HepG2 (cell line): ENCODE measurements at regions of chr16 and their contacts with region 1.

Region 1: DNA sequence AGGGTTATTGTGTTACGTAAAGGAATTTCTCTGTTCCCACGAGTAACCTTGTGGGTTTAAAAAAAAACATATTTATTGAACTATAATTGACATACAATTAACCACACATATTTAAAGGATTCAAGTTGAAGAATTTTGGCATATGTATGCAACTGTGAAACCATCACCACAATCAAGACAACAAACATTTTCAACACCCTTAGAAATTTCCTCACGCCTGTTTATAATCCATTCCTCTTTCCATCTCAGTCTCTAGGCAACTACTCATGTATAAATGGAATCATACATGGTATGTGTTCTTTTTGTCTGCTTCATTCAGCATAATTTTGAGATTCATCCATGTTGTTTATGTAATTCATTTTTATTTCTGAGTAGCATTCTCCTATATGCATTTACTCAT is 104.0 kb downstream of the MRTFB start:
- DNase-seq: no peak
- ATAC-seq: no peak
- H3K4me3 ChIP-seq: no peak overlapping the region
- H3K27ac ChIP-seq: no peak overlapping the region
- H3K4me1 ChIP-seq: 0 out of 2 replicates have a peak, but pooled peaks cover 6% of the 10 kb centered on the region
- H3K27me3 ChIP-seq: no peaks in the 10 kb centered on the region
- CTCF ChIP-seq: no peak
- EP300 ChIP-seq: no peak
- POLR2A ChIP-seq: no peak
- RAD21 ChIP-seq: no peak

Region 2: DNA sequence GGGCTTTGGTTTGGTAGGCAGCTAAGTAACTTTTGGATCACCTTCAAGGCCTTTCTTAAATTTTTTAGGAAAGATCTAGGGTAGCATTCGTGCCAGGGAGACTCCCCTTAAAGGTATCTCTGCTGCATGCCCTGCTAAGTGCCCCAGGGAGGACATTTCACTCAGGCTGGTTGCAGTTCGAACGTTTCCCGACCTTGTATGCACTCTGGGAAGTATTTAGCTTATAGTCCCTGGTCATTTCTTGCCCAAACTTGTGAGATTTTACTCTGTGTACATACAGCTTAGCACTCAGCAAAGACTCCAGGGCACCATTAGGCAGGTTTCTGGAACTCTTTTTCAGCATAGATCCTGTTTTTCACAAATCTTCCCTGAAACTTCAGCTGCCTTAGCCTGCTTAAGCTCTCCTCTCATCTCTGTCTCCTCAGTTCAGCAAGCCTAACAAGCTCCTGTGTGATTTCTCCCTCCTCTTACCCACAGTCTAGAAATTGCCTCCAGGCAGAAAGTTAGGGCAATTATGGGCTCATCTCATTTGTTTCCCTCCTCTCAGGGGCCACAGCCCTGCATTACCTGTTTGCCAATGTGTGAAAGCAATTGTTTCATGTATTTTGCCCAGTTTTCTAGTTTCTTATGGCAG is 19.4 kb before region 1 on chr16:
- CTCF ChIA-PET with region 1: no interaction called
- POLR2A ChIA-PET with region 1: no interaction called
- in situ Hi-C with region 1: no loop called
- intact Hi-C with region 1: no loop called
- DNase-seq: no peak
- ATAC-seq: no peak
- H3K4me3 ChIP-seq: no peak overlapping the region
- H3K27ac ChIP-seq: no peak overlapping the region
- H3K4me1 ChIP-seq: 0 out of 2 replicates have a peak, but pooled peaks cover 5% of the 10 kb centered on the region
- H3K27me3 ChIP-seq: no peaks in the 10 kb centered on the region
- CTCF ChIP-seq: no peak
- EP300 ChIP-seq: no peak
- POLR2A ChIP-seq: no peak
- RAD21 ChIP-seq: no peak

Region 3: GRCh38 chr16:14240219-14240843 is 65.2 kb after region 1 on chr16:
- CTCF ChIA-PET with region 1: no interaction called
- POLR2A ChIA-PET with region 1: no interaction called
- in situ Hi-C with region 1: no loop called
- intact Hi-C with region 1: loop called (anchors 2 kb)
- DNase-seq: peak; percentile 25
- ATAC-seq: peak; percentile 79
- H3K4me3 ChIP-seq: no peak overlapping the region
- H3K27ac ChIP-seq: no peak overlapping the region
- H3K4me1 ChIP-seq: peaks cover 14% of the 10 kb centered on the region
- H3K27me3 ChIP-seq: no peaks in the 10 kb centered on the region
- CTCF ChIP-seq: no peak
- EP300 ChIP-seq: no peak
- POLR2A ChIP-seq: no peak
- RAD21 ChIP-seq: no peak